ENCODE measurements at regions of chr3 and their contacts with region 1.

Region 1: GRCh38 chr3:108489771-108490170 is 20.6 kb downstream of the MYH15 start:
- DNase-seq: peak in 1 of 2 donors; percentile 14
- H3K4me3 ChIP-seq: no peak overlapping the region
- H3K27ac ChIP-seq: no peak overlapping the region
- H3K4me1 ChIP-seq: no peaks in the 10 kb centered on the region
- H3K27me3 ChIP-seq: no peaks in the 10 kb centered on the region
- CTCF ChIP-seq: peak; percentile 38 to 90 (median 78)
- POLR2A ChIP-seq: no peak

Region 2: DNA sequence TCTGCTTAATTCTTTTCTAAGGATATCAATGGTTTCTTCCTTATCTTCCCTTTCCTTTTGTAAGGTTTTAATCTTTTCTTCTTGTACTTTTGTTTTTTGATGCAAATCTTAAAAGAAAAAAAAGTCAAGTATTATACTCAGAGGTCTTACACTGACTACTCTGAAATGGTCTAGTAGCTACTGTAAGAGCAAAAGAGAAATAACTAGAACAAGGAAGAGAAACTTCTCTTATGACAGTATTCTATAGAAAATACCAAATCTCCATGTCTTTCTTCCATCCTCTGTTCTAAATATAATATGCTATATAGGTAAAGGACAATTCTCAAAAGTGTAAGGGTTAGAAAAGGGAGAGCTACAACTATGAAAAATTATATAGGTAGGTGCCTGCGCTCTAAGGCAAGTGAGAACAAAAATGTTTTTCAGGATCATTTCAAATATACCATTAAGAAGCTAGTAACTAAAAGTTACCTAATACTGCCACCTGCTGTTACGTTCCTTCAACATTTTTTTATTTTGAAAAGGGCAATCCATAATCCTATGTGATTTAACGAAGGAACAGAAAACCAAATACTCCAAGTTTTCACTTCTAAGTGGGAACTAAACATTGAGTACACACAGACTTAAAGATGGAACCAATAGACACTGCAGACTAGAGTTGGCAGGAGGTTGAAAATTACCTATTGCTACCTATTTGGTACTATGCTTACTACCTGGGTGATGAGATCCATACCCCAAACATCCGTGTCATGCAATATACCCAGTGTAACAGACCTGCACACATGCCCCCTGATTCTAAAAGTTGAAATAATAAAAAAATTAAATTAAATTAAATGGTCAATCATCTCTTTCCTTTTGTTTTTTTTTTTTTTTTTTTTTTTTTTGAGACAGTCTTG is 62.7 kb after region 1 on chr3:
- intact Hi-C with region 1: loop called (anchors 5 kb)
- DNase-seq: no peak
- H3K4me3 ChIP-seq: no peak overlapping the region
- H3K27ac ChIP-seq: no peak overlapping the region
- H3K4me1 ChIP-seq: peaks cover 7 to 17% of the 10 kb centered on the region in 2 donors
- H3K27me3 ChIP-seq: no peaks in the 10 kb centered on the region
- CTCF ChIP-seq: peak in 4 of 6 experiments; percentile 18 to 63 (median 51)
- POLR2A ChIP-seq: no peak

Region 3: GRCh38 chr3:108564564-108564963 is 74.8 kb after region 1 on chr3:
- intact Hi-C with region 1: no loop called
- DNase-seq: no peak
- H3K4me3 ChIP-seq: no peak overlapping the region
- H3K27ac ChIP-seq: no peak overlapping the region
- H3K4me1 ChIP-seq: no peaks in the 10 kb centered on the region
- H3K27me3 ChIP-seq: no peaks in the 10 kb centered on the region
- CTCF ChIP-seq: no peak
- POLR2A ChIP-seq: no peak

Measured in thyroid gland (tissue), 4 donors.